Activated T-helper 2 cell treated with anti-CD3 and anti-CD28 coated beads, Interferon-gamma antibody, Interleukin-2, Interleukin-4, amounts not matched to agents 10 μg/mL and 5 μg/mL and 100 μg/mL, durations not matched to agents 14 hours and 24 hours and 36 hours (primary cell): ENCODE measurements at regions of chr12 and their contacts with region 1.

Region 1: GRCh38 chr12:1605129-1606020 is 11.0 kb upstream of the FBXL14 start:
- DNase-seq: peak; percentile 48
- H3K4me3 Mint-ChIP-seq: peak overlapping the region; percentile 71
- H3K27ac Mint-ChIP-seq: peak overlapping the region; percentile 15
- H3K4me1 Mint-ChIP-seq: peaks cover 32% of the 10 kb centered on the region
- H3K27me3 Mint-ChIP-seq: peaks cover 5% of the 10 kb centered on the region

Region 2: DNA sequence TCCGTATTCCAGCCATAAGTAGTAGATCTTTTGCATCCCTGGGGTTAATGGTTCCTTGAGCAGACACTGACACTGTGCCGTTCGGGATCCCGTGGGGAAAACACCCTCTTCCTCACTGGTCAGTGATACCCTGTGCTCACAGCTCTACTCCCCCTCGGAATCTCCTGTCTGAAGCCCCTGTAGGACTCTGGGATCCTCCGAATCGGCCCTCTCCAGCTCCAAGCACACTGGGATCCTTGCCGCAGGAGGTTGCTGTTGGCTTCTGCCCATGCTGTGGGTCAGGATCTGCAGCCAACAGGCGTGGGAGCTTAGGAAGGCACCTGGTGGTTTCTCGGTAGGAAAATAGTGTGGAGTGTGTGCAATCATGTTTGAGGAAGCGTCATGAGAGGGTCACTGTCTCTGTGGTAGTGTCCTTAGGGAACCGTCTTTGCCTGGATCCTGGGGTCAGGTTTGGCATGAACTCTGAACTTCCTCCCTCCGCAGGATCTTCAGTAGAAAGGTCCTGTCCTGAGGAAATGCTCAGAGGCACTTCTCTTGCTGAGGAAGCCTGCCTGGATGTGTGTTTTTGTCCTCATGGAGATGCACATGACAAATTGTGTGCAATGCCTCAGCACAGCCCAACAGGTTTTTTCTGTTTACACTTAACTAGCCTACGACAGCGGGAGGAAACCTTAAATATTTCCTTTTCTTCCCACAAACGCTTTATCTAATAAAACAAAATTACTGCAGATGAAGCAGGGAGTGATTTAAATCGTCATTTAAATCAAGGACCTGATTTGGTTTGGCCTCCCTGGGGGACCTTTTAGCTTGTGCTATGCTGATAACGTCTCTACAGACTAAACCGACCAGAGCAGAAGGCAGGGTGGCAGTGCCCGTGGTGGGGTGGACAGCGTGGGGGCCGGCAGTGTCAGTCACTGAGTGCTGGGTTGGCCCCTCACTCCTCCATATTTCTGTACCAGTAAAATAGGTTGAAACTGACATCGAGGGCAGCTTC is 29.7 kb before region 1 on chr12:
- intact Hi-C with region 1: no loop called
- DNase-seq: no peak
- H3K4me3 Mint-ChIP-seq: no peak overlapping the region
- H3K27ac Mint-ChIP-seq: no peak overlapping the region
- H3K4me1 Mint-ChIP-seq: no peaks in the 10 kb centered on the region
- H3K27me3 Mint-ChIP-seq: peaks cover 17% of the 10 kb centered on the region

Region 3: DNA sequence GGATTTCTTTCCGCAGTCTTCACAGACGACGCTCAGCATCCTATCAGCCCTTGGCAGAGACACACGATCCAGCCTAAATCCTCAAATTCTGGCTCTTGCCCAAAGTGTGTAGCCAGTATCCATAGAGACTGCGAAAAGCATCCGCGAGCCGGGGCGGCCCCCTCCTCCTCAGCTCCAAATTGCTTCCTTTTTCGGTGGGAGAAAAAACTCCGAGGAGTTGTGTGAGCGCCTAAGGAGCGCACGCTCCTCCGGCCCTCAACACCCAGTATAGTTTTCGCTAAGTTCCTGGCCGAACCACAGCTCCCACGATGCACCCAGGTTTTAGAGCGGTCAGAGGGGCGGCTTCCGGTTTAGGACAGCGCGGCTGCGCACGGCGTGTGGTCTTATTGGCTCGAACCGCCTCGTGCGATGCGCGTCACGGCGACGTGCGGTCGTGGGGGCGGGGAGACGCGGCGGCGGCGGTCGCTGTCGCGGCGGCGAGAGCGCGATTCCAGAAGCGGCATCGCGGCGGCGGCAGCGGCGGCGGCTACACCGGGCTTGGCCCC is 85.3 kb after region 1 on chr12 and contains the start of gene ADIPOR2:
- intact Hi-C with region 1: loop called (anchors 10 kb)
- DNase-seq: peak; percentile 94
- H3K4me3 Mint-ChIP-seq: peak within 1 kb of the TSS; percentile 100
- H3K27ac Mint-ChIP-seq: peak within 1 kb of the TSS; percentile 99
- H3K4me1 Mint-ChIP-seq: peaks cover 36% of the 10 kb centered on the region
- H3K27me3 Mint-ChIP-seq: peaks cover 14% of the 10 kb centered on the region
- total RNA-seq, gene ADIPOR2: 69.2 and 81.0 TPM in 2 replicates

Region 4: GRCh38 chr12:1758887-1759286 is 153.5 kb after region 1 on chr12:
- intact Hi-C with region 1: no loop called
- DNase-seq: no peak
- H3K4me3 Mint-ChIP-seq: no peak overlapping the region
- H3K27ac Mint-ChIP-seq: no peak overlapping the region
- H3K4me1 Mint-ChIP-seq: peaks cover 7% of the 10 kb centered on the region
- H3K27me3 Mint-ChIP-seq: no peaks in the 10 kb centered on the region